ENCODE measurements at regions of chr22 and their contacts with region 1.

Region 1: DNA sequence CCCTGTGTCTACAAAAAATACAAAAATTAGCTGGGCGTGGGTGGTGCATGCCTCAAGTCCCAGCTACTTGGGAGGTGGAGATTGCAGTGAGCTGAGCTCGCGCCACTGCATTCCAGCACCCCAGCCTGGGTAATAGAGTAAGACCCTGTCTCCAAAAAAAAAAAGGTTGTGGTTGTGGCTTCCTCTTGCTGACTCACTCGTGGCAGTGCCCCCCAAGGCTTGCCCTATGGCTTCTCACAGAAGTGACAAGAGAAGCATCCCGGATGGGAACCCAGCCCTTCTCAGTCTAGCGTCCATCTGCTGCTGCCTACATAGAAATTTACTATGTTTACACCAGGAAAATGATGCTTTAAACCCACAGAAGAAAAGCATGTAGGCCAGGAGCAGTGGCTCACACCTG is 68.5 kb upstream of the PITPNB start:
- DNase-seq: peak; percentile 93
- ATAC-seq: peak; percentile 88
- H3K4me3 ChIP-seq: no peak overlapping the region
- H3K27ac ChIP-seq: no peak overlapping the region; the same call in 1 of the 2 replicates
- H3K4me1 ChIP-seq: peaks cover 13% of the 10 kb centered on the region
- H3K27me3 ChIP-seq: no peaks in the 10 kb centered on the region
- CTCF ChIP-seq: no peak
- POLR2A ChIP-seq: no peak
- RAD21 ChIP-seq: no peak

Region 2: DNA sequence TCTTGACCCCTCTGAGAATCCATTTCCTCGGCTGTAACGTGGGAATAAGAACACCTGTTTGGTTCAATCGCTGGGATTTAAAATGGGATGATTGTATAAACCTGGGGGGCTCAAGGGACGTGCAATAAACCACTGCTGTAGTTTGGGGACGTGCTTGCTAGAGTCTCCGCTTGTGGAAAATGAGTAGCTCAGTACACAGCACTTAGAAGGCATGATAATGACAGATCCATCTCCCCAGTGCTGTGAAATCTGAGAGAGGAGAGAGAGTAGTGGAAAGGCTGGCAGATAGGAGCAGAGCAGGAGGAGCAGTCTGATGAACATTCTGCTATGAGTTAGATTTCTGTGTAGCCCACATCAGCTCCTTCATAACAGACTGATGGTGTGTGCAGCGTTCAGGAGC is 442.5 kb before region 1 on chr22:
- CTCF ChIA-PET with region 1: no interaction called
- POLR2A ChIA-PET with region 1: interaction called, 15 read pairs
- dilution Hi-C with region 1: no loop called
- in situ Hi-C with region 1: no loop called
- intact Hi-C with region 1: no loop called
- DNase-seq: no peak
- ATAC-seq: no peak
- H3K4me3 ChIP-seq: no peak overlapping the region
- H3K27ac ChIP-seq: no peak overlapping the region
- H3K4me1 ChIP-seq: no peaks in the 10 kb centered on the region; the same call in 1 of the 2 replicates
- H3K27me3 ChIP-seq: peaks cover 46% of the 10 kb centered on the region
- CTCF ChIP-seq: no peak
- POLR2A ChIP-seq: no peak
- RAD21 ChIP-seq: no peak

Region 3: DNA sequence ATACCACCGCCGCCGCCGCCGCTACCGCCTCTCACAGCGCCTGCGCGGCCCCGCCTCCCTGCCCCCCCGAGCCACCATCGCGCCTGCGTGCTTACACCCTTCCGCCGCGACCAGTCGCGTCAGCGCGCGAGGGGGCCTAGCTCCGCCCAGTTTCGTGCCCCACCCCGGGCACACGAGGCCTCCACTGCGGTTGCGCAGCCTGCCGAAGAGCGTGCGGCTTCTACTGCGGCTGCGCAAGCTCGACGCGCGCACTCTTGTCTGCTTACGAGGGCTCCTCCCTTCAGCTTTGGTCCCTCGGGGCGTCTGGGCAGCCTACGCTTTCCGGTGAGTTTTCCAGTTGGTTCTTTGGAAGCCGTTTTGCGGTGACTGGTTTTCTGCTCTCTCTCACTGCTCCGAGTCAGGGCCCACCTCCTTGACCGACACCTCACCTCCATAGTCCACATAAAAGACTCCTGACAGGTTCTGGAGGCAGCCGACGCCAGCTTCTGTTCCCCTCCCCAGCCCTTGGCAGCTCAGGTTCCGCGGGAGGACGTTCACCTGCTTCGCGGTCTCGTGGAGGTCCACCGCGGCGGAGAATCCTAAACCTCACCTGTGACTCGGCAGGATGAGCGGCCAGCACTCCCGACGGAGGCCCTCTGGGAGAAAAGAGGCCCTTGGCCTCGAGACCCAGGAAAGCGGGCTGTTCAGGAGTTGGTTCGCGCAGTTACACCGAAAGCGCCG is 68.2 kb before region 1 on chr22 and contains the start of gene PITPNB:
- CTCF ChIA-PET with region 1: no interaction called
- POLR2A ChIA-PET with region 1: no interaction called
- dilution Hi-C with region 1: no loop called
- in situ Hi-C with region 1: no loop called
- intact Hi-C with region 1: loop called (anchors 2 kb)
- DNase-seq: peak; percentile 97
- ATAC-seq: peak; percentile 91
- H3K4me3 ChIP-seq: peak within 1 kb of the TSS; percentile 84
- H3K27ac ChIP-seq: peak within 1 kb of the TSS; percentile 92
- H3K4me1 ChIP-seq: peaks cover 5% of the 10 kb centered on the region
- H3K27me3 ChIP-seq: no peaks in the 10 kb centered on the region
- CTCF ChIP-seq: no peak
- POLR2A ChIP-seq: peak; percentile 87
- RAD21 ChIP-seq: no peak
- total RNA-seq, gene PITPNB: 19.7 and 29.2 TPM in 2 replicates

Region 4: DNA sequence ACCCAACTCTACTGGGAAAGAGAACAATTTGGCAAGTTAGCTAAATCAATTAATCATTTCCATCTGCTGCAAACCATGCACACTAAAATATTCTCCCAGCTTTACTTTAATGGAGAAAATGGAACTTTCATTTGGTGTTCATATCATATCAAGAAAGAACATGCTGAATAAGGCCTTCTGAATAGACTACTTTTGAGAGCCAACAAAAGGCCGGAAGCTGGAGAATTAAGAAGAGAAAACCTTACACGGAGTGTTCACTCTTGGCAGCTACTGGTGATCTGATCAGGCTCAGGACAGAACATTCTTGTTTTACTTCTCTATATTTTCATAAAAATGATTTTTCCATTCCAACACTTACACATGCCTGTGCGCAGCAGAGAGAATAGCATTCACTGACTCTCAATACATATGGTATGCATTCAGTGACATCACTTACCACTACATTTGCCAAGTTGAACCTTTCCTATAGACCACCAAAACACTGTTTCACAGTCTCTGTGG is 526.8 kb after region 1 on chr22:
- CTCF ChIA-PET with region 1: no interaction called
- POLR2A ChIA-PET with region 1: no interaction called
- dilution Hi-C with region 1: no loop called
- in situ Hi-C with region 1: no loop called
- intact Hi-C with region 1: no loop called
- DNase-seq: no peak
- ATAC-seq: no peak
- H3K4me3 ChIP-seq: no peak overlapping the region
- H3K27ac ChIP-seq: no peak overlapping the region
- H3K4me1 ChIP-seq: peaks cover under 1% of the 10 kb centered on the region
- H3K27me3 ChIP-seq: no peaks in the 10 kb centered on the region
- CTCF ChIP-seq: no peak
- POLR2A ChIP-seq: no peak
- RAD21 ChIP-seq: no peak